Activated CD8-positive, alpha-beta T cell treated with anti-CD3 and anti-CD28 coated beads for 36 hours (primary cell): ENCODE measurements at regions of chr3 and their contacts with region 1.

Region 1: DNA sequence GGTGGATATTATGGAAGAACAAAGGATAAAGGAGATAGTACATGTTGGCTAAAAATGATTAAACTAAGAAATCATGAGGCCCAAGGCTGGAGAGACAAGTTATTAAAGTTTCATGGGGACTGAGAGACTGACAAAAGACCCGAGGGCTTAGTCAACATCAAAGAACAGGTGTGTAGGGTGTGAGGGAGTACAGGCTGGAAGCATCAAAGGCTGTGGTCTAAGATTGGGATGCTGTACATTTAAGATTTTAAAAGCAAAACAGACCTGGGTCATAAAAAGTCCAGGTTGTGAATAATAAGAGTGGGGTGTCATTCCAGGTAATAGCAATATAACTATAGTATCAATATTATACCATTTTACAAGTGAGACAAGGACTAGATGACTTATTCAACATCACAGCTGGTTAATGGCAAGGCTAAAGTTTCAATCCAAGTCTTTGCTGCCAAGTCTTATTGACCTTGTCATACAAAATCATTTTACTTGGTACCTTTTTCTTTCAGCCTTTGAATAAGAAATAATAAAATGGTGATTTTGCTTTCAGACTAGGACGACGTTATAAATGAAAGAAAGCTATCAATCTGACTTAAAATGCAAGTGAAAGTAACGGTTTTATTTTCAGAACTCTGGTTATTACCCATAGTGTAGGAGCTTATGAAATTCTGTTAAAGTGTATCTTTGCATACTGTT is 211.6 kb downstream of the TNIK start:
- DNase-seq: no peak
- ATAC-seq: peak; percentile 77
- H3K4me3 Mint-ChIP-seq: no peak overlapping the region
- H3K27ac Mint-ChIP-seq: no peak overlapping the region
- H3K4me1 Mint-ChIP-seq: peaks cover 44% of the 10 kb centered on the region
- H3K27me3 Mint-ChIP-seq: no peaks in the 10 kb centered on the region
- CTCF ChIP-seq: no peak

Region 2: GRCh38 chr3:171284308-171285075 is 35.9 kb after region 1 on chr3:
- CTCF ChIA-PET with region 1: interaction called, 5 read pairs
- POLR2A ChIA-PET with region 1: no interaction called
- intact Hi-C with region 1: loop called (anchors 5 kb)
- DNase-seq: peak; percentile 31
- ATAC-seq: peak; percentile 55
- H3K4me3 Mint-ChIP-seq: peak overlapping the region; percentile 37
- H3K27ac Mint-ChIP-seq: peak overlapping the region; percentile 73
- H3K4me1 Mint-ChIP-seq: peaks cover 69% of the 10 kb centered on the region
- H3K27me3 Mint-ChIP-seq: no peaks in the 10 kb centered on the region
- CTCF ChIP-seq: no peak